HEK293 (cell line): ENCODE measurements at regions of chr9 and their contacts with region 1.

Region 1: GRCh38 chr9:133103183-133103986 is 17.7 kb downstream of the RALGDS start:
- H3K4me3 ChIP-seq: no peak overlapping the region
- H3K27ac ChIP-seq: no peak overlapping the region
- H3K4me1 ChIP-seq: no peaks in the 10 kb centered on the region
- CTCF ChIP-seq: peak; percentile 89

Region 2: GRCh38 chr9:132946624-132947295 is 156.6 kb before region 1 on chr9:
- CTCF ChIA-PET with region 1: no interaction called
- POLR2A ChIA-PET with region 1: no interaction called
- H3K4me3 ChIP-seq: no peak overlapping the region
- H3K27ac ChIP-seq: no peak overlapping the region
- H3K4me1 ChIP-seq: peaks cover 9% of the 10 kb centered on the region
- CTCF ChIP-seq: no peak

Region 3: DNA sequence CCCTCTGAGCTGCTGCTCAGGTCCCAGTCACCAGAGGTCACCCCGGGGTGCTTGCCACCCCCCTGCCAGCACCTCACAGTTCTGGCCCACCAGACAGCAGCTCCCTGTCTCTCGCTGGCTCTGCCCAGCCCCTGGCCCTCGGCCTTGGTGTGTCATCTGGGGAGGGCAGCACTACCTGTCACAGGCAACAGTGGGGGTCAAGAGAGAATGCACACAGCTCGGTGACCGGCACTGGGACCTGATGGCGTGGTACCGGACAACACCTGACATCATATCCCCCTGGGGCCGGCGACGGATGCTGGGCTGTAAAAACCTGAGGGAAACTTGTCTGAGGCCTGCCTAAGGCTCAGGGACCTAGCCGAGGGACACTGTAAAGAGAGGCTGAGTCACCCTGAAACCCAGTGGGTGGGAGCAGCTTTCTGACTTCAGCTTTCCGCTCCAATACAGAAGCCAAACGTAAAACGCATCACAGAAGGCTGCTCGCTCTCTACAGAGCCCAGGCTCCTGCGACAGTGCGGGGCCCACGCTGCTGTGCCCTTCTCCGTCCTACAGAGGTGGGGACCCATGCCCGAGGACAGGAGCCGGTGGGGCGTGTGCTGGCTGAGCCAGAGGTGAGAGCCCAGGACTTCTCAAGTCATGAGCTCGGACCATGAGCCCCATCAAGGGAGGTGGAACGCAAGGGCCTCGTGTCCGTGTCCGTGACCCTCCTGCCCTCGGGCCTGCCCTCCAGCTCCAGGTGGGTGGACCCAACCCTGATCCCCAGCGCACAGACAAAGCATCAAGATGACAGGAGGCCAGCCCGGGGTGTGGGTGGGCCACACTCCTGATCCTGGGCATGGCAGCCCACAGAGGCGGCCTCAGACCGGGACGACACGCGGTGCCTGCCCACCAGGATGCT is 12.3 kb after region 1 on chr9:
- CTCF ChIA-PET with region 1: interaction called, 25 read pairs
- POLR2A ChIA-PET with region 1: interaction called, 11 read pairs
- H3K4me3 ChIP-seq: no peak overlapping the region
- H3K27ac ChIP-seq: no peak overlapping the region
- H3K4me1 ChIP-seq: peaks cover 14% of the 10 kb centered on the region
- CTCF ChIP-seq: no peak

Region 4: DNA sequence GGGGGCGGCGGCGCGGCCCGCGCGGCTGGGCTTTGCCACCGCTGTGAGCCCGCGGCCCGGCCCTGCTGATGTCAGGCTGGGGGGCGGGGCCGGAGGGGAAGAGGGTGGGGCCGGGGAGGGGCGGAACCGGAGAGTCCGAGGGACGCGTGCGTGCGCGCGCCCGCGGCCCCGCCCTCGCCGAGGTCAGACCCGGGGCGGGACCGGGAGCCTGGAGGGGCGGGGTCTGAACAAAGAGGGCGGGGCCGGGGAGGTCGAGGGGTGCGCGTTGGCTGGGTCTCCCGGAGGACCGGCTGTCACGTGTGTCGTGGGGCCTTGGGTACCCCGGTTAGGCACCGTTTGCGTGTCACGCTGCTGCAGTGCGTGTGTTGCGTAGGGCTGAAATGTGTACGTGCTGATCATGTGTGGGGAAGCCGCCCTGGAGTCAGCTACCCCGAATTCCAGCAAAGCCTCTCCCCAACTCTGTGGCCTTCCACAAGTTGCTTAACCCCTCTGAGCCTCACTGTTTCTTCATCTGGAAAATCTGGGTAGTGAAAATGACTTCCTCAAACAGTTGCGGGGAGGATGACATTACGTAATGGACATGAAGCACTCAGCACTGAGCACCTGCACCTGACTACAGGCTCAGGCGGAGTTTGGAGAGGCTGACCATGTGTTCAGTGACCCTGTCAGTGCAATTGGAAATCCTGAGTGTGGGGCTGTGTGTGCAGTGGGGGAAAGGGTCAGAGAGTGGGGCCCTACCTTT is 18.0 kb after region 1 on chr9 and contains the start of gene RALGDS:
- CTCF ChIA-PET with region 1: interaction called, 25 read pairs
- POLR2A ChIA-PET with region 1: interaction called, 11 read pairs
- H3K4me3 ChIP-seq: peak within 1 kb of the TSS; percentile 66
- H3K27ac ChIP-seq: peak within 1 kb of the TSS; percentile 74; the same call in 1 of the 2 replicates
- H3K4me1 ChIP-seq: peaks cover 5% of the 10 kb centered on the region; the same call in 1 of the 2 replicates
- CTCF ChIP-seq: no peak

Region 5: GRCh38 chr9:133133681-133134418 is 30.5 kb after region 1 on chr9:
- CTCF ChIA-PET with region 1: interaction called, 15 read pairs
- POLR2A ChIA-PET with region 1: no interaction called
- H3K4me3 ChIP-seq: no peak overlapping the region
- H3K27ac ChIP-seq: no peak overlapping the region
- H3K4me1 ChIP-seq: no peaks in the 10 kb centered on the region
- CTCF ChIP-seq: no peak

Region 6: DNA sequence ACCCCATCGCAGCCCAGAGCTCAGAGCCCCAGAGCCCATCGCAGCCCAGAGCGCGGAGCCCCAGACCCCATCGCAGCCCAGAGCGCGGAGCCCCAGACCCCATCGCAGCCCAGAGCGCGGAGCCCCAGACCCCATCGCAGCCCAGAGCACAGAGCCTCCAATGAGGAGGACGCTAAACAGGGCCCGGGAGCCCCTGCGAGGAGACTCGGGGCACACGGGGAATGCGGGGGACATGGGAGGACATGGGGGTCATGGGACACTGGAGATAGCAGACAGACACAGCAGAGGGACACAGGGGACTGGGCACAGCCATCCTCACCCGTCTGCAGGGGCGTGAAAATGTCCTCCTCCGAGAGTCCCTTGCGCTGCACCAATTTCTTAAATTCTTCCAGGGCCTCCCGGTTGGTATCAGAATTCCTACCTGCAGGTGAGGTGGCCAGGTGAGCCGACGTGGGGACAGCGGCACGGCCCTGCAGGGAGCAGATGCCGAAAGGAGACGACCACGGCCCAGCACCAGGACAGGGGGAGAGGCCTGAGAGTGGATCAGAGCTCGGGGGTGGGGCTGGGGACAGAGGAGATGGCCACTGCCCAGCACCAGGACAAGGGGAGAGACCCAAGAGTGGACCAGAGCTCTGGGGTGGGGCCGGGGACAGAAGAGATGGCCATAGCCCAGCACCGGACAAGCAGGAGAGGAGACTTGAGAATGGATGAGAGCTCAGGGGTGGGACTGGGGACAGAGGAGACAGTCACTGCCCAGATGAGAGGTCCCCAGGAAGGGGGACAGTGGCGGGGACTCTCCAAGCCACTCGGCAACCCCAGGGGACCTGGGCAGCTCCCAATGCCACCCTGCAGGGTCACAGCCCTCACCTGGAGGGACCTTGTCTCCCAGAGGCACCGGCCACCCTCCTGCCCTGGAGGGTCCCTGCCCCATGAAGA is 102.9 kb after region 1 on chr9:
- CTCF ChIA-PET with region 1: no interaction called
- POLR2A ChIA-PET with region 1: no interaction called
- H3K4me3 ChIP-seq: no peak overlapping the region
- H3K27ac ChIP-seq: no peak overlapping the region
- H3K4me1 ChIP-seq: no peaks in the 10 kb centered on the region
- CTCF ChIP-seq: no peak